Endothelial cell of umbilical vein (primary cell): ENCODE measurements at regions of chr1 and their contacts with region 1.

Region 1: DNA sequence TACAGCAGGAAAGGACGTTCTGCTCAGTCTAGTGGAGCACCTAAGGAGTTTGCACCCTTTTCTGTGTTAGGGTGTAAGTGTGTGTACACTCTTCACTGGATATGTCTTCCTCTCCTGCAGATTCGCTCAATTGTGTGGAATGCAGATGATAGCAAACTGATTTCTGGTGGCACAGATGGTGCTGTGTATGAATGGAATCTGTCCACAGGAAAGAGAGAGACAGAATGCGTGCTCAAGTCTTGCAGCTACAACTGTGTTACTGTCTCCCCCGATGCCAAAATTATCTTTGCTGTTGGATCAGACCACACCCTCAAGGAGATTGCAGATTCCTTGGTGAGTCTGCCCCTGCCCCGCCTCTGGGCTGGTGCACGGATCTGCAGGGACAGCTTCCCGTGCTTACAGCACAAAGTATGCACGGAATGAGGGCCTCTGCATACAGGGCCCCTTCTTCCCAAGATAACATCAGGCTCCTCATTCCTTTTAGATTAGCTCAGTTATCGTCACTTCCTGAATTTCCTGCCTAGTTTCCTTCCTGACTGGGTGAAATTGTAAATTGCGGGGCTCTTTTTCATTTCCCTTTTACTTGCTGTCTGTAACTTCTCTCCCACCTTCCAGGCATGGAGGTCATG is 34.6 kb downstream of the CFAP57 start:
- DNase-seq: no peak
- H3K4me3 ChIP-seq: peak overlapping the region in 1 of 3 experiments; percentile 7
- H3K27ac ChIP-seq: peak overlapping the region; percentile 97
- H3K4me1 ChIP-seq: peaks cover 27% of the 10 kb centered on the region
- H3K27me3 ChIP-seq: no peaks in the 10 kb centered on the region
- CTCF ChIP-seq: no peak
- POLR2A ChIP-seq: peak; percentile 92

Region 2: DNA sequence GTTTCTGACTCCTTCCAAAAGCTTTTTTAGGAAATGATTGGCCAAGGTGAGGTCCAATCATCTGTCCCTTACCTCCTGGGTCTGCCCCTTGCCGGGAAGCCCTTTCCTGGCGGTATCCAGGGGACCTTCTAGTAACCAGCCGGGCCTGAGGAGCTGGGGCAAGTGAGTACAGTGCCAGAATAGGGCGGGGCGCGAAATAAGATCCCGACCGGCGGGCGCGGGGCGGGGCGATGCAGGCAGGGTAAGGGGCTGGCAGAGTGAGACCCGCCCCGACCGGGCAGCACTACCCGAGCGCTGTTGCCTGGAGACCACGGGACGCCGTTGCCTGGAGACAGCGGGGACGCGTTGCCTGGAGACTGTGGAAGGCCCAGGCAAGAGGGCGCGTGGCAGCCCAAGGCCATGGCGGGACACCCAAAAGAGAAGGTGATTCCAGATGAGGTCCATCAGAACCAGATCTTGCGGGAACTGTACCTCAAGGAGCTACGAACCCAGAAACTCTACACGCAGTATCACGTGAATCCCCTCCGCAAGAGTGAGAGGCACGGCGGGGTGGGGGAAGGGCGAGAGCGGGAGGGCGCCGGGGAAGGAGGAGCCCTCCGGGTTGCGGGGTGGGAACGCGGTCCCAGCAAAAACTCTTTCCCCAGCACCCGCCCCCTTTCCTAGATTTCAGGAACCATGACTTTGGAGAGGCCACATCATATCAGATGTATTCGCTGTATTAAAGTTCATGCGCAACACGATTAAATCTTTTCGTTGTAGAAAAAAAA is 59.0 kb before region 1 on chr1:
- CTCF ChIA-PET with region 1: no interaction called
- POLR2A ChIA-PET with region 1: no interaction called
- dilution Hi-C with region 1: no loop called
- intact Hi-C with region 1: loop called (anchors 1 kb)
- DNase-seq: peak; percentile 80
- H3K4me3 ChIP-seq: peak overlapping the region; percentile 4 to 44 (median 21)
- H3K27ac ChIP-seq: no peak overlapping the region
- H3K4me1 ChIP-seq: peaks cover 5% of the 10 kb centered on the region
- H3K27me3 ChIP-seq: peaks cover 27 to 36% of the 10 kb centered on the region in 2 experiments
- CTCF ChIP-seq: no peak
- POLR2A ChIP-seq: no peak

Region 3: GRCh38 chr1:43171876-43172526 is 34.7 kb before region 1 on chr1 and contains the starts of genes CFAP57 and EBNA1BP2:
- CTCF ChIA-PET with region 1: interaction called, 10 read pairs
- POLR2A ChIA-PET with region 1: interaction called, 23 read pairs
- dilution Hi-C with region 1: no loop called
- intact Hi-C with region 1: loop called (anchors 1 kb)
- DNase-seq: peak; percentile 94
- H3K4me3 ChIP-seq: peak within 1 kb of the TSS; percentile 6 to 81 (median 51)
- H3K27ac ChIP-seq: peak within 1 kb of the TSS; percentile 30
- H3K4me1 ChIP-seq: peaks cover 12% of the 10 kb centered on the region
- H3K27me3 ChIP-seq: peaks cover 0 to 2% of the 10 kb centered on the region in 2 experiments
- CTCF ChIP-seq: no peak
- POLR2A ChIP-seq: peak; percentile 81
- total RNA-seq, gene CFAP57: 0.28 and 0.88 TPM in 2 replicates
- total RNA-seq, gene EBNA1BP2: 104 and 105 TPM in 2 replicates